Right lobe of liver (tissue), 6 donors: ENCODE measurements at regions of chr1 and their contacts with region 1.

Region 1: GRCh38 chr1:52702886-52703787 is 5.0 kb upstream of the COA7 start:
- DNase-seq: peak; percentile 93 to 96 (median 95)
- ATAC-seq: peak; percentile 73 to 88 (median 82)
- H3K4me3 ChIP-seq: peak overlapping the region; percentile 38 to 55 (median 54)
- H3K27ac ChIP-seq: peak overlapping the region; percentile 88 to 98 (median 95)
- H3K4me1 ChIP-seq: peaks cover 0 to 33% (median 8%) of the 10 kb centered on the region in 4 donors
- H3K27me3 ChIP-seq: no peaks in the 10 kb centered on the region
- CTCF ChIP-seq: no peak
- POLR2A ChIP-seq: peak; percentile 78

Region 2: GRCh38 chr1:52927212-52928014 is 224.3 kb after region 1 on chr1 and contains the start of gene SCP2:
- intact Hi-C with region 1: loop called in 1 of 2 experiments (anchors 10 kb)
- DNase-seq: peak; percentile 91 to 94 (median 93)
- ATAC-seq: peak; percentile 82 to 88 (median 84)
- H3K4me3 ChIP-seq: peak within 1 kb of the TSS; percentile 81 to 85 (median 85)
- H3K27ac ChIP-seq: peak within 1 kb of the TSS; percentile 84 to 92 (median 88)
- H3K4me1 ChIP-seq: peaks cover 0 to 38% (median 3%) of the 10 kb centered on the region in 4 donors
- H3K27me3 ChIP-seq: no peaks in the 10 kb centered on the region
- CTCF ChIP-seq: no peak
- POLR2A ChIP-seq: peak; percentile 92
- total RNA-seq, gene SCP2: 207 to 885 (median 634) TPM